ENCODE measurements at regions of chr1 and their contacts with region 1.

Region 1: DNA sequence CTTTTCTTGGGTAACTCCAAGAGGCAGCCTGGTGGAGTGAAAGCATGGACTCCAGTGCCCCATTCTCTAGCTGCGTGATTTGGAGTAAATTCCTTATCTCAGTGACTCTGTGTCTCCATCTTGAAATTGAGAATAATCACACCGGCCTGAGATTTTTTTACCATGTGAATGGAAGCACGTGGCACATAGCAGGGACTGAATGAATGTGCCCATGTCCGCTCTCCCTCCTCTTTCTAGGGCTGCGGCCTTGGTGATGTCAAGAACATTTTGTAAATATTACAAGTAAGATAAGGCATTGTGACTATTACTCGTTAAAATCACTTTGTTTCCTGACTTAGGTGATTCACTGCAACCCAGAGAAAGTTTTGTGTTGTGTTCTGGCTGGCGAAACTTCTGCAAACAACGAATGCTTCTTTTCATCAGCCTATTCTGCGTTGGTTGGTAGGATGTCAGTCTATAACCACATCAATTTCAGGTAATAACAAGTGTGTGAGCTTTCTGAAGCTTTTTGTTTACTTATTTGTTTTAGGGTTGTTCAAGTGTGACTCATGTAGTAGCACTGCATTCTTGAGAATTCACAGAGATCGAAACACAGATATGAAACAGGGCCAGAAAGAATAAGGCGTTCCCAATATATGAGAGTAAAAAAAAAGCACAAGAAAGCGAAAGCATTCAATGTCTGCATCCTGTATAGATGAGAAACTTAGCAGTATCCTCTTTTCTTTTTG is 135.7 kb upstream of the SLC45A1 start:
- DNase-seq: peak; percentile 33
- H3K4me3 Mint-ChIP-seq: no peak overlapping the region
- H3K27ac Mint-ChIP-seq: peak overlapping the region; percentile 86
- H3K4me1 Mint-ChIP-seq: peaks cover 18% of the 10 kb centered on the region
- H3K27me3 Mint-ChIP-seq: no peaks in the 10 kb centered on the region

Region 2: GRCh38 chr1:8090241-8090702 is 91.9 kb before region 1 on chr1:
- intact Hi-C with region 1: loop called (anchors 1 kb)
- DNase-seq: no peak
- H3K4me3 Mint-ChIP-seq: no peak overlapping the region
- H3K27ac Mint-ChIP-seq: peak overlapping the region; percentile 72
- H3K4me1 Mint-ChIP-seq: peaks cover 46% of the 10 kb centered on the region
- H3K27me3 Mint-ChIP-seq: peaks cover 2% of the 10 kb centered on the region

Region 3: GRCh38 chr1:8152731-8153702 is 29.2 kb before region 1 on chr1:
- intact Hi-C with region 1: loop called (anchors 1 kb)
- DNase-seq: peak; percentile 47
- H3K4me3 Mint-ChIP-seq: peak overlapping the region; percentile 32
- H3K27ac Mint-ChIP-seq: peak overlapping the region; percentile 94
- H3K4me1 Mint-ChIP-seq: peaks cover 36% of the 10 kb centered on the region
- H3K27me3 Mint-ChIP-seq: peaks cover 2% of the 10 kb centered on the region

Region 4: DNA sequence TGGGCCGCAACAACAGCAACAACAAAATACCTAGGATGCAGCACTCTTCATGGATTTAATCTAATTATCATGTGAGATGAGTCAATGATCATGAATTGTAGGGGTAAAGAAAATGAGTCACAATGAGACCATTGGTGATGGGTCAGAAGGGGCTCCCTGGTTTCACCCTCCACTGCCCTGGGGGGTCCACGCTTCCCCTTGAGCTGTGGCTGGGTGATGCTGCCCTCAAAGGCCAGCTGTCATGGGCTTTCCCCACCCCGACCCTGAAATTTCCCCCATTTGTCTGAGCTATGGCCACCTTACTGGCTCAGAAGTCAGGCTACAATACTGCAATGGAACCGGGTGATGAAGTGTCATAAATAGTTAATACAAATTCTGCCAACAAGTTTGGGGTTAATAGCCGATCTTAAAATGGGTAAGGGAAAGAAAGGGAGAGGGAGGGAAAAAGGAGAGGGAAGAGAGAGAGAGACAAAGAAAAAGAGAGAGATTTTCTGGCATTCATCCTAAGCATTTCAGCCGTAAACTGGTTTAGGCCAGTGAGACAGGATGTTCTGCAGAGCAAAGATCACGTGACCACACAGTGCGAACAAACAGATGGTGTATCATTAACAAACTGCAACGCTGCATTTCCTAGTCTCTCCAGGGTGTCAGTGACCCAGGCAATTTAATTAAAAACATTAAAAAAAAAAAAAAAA is 12.7 kb before region 1 on chr1:
- intact Hi-C with region 1: no loop called
- DNase-seq: peak; percentile 45
- H3K4me3 Mint-ChIP-seq: peak overlapping the region; percentile 10
- H3K27ac Mint-ChIP-seq: peak overlapping the region; percentile 92
- H3K4me1 Mint-ChIP-seq: peaks cover 30% of the 10 kb centered on the region
- H3K27me3 Mint-ChIP-seq: no peaks in the 10 kb centered on the region